HepG2 (cell line): ENCODE measurements at regions of chr16 and their contacts with region 1.

Region 1: GRCh38 chr16:84617791-84618580 is at the start of gene COTL1:
- DNase-seq: peak; percentile 87
- ATAC-seq: peak; percentile 76
- H3K4me3 ChIP-seq: peak within 1 kb of the TSS; percentile 76 to 89 (median 85)
- H3K27ac ChIP-seq: no peak within 1 kb of the TSS
- H3K4me1 ChIP-seq: peaks cover 52% of the 10 kb centered on the region
- H3K27me3 ChIP-seq: no peaks in the 10 kb centered on the region; a peak in 1 of 5 replicates
- CTCF ChIP-seq: no peak
- EP300 ChIP-seq: no peak; a peak in 1 of 4 replicates
- POLR2A ChIP-seq: peak in 1 of 2 experiments; percentile 58; a peak in 1 of 4 replicates
- RAD21 ChIP-seq: peak; percentile 32; the same call in 1 of the 2 replicates
- total RNA-seq, gene COTL1: 8.6 and 8.7 TPM in 2 replicates

Region 2: GRCh38 chr16:84511180-84511824 is 106.7 kb before region 1 on chr16:
- CTCF ChIA-PET with region 1: interaction called, 77 read pairs
- POLR2A ChIA-PET with region 1: no interaction called
- in situ Hi-C with region 1: loop called (anchors 5 kb)
- intact Hi-C with region 1: loop called (anchors 1 kb)
- DNase-seq: peak; percentile 68
- ATAC-seq: peak; percentile 65
- H3K4me3 ChIP-seq: no peak overlapping the region
- H3K27ac ChIP-seq: no peak overlapping the region
- H3K4me1 ChIP-seq: peaks cover 37% of the 10 kb centered on the region
- H3K27me3 ChIP-seq: no peaks in the 10 kb centered on the region; a peak in 1 of 5 replicates
- CTCF ChIP-seq: peak; percentile 98
- EP300 ChIP-seq: no peak
- POLR2A ChIP-seq: no peak
- RAD21 ChIP-seq: peak; percentile 91

Region 3: DNA sequence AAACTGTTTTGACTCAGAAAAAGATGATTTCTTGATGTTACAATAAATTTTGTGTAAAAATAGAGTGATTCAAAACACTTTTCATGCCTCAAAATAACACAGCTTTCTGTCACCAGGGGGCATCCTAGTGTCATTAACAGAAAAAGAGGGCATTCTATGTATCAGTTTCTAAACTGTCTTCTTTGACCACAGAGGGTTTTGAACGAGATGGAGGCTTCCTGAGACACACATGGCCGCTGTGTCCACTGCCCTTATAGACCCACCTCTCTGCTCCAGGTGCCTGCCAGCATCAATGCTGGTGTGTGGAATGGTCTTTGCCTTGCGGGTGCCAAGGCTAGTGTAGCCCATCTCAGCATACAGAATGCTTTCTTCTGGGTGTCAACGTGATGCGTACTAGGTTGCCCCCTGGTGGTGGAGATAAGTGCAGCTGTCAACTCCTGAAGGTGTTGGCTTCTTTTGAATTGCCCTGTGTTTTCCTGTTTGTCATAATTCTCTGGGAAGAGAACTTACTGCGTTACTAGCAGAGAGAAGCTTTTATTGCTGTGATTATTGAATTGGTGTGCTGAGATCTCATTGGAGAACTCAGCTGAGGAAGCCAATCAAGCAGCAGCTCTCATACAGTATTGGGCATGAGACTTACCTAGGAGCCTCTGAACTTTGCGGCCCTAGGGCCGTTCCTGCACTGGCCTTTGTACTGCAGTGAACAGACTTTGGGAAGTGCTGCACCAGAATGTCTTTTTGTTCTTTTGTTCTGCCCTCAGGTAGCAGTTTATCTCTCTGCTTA is 120.5 kb after region 1 on chr16:
- CTCF ChIA-PET with region 1: interaction called, 37 read pairs
- POLR2A ChIA-PET with region 1: interaction called, 3 read pairs
- in situ Hi-C with region 1: no loop called
- intact Hi-C with region 1: loop called (anchors 1 kb)
- DNase-seq: peak; percentile 78
- ATAC-seq: peak; percentile 76
- H3K4me3 ChIP-seq: no peak overlapping the region
- H3K27ac ChIP-seq: peak overlapping the region; percentile 7
- H3K4me1 ChIP-seq: peaks cover 66% of the 10 kb centered on the region
- H3K27me3 ChIP-seq: no peaks in the 10 kb centered on the region
- CTCF ChIP-seq: peak; percentile 93
- EP300 ChIP-seq: no peak
- POLR2A ChIP-seq: no peak
- RAD21 ChIP-seq: peak; percentile 39

Region 4: DNA sequence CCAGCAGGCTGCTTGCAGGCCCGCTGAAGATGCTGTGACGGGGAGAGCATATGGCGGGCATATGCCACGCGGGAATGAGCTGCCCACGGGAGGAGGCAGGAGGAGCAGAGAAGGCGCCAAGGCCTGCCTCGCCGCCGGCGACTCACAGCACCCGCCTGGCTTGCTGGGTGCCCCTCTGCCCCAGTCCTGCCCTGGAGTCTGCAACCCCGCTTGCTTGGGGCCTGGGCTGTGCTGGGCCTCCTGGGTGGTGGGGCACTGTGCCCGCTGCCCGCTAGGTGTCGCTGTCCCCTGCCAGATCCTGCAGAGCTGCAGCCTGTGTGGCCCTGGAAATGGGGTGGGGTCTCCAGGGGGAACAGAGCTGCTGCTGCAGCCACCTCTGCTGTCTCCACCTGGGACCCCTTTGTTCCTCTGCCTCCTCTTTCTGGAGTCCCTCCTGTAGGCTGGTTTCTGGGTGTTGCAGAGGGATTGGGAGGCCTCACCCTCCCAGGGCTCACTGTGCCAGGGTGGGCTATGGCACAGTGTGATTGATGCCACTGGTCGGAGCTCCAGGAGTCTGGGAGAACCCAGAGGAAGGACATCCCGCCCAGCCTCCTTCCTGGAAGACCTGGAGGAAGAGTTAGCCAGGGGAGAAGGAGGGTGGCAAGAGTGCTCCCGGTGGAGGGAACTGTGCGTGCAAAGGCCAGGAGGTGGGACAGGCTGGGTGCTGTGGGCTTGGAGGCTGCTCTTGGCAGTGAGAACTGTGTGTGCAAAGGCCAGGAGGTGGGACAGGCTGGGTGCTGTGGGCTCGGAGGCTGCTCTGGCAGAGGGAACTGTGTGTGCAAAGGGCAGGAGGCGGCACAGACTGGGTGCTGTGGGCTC is 635.3 kb after region 1 on chr16:
- CTCF ChIA-PET with region 1: no interaction called
- POLR2A ChIA-PET with region 1: no interaction called
- in situ Hi-C with region 1: no loop called
- intact Hi-C with region 1: no loop called
- DNase-seq: peak; percentile 31
- ATAC-seq: peak; percentile 93
- H3K4me3 ChIP-seq: no peak overlapping the region
- H3K27ac ChIP-seq: no peak overlapping the region
- H3K4me1 ChIP-seq: peaks cover 6% of the 10 kb centered on the region
- H3K27me3 ChIP-seq: no peaks in the 10 kb centered on the region
- CTCF ChIP-seq: peak; percentile 98
- EP300 ChIP-seq: no peak
- POLR2A ChIP-seq: no peak
- RAD21 ChIP-seq: peak; percentile 73